ENCODE measurements at regions of chr3 and their contacts with region 1.

Region 1: GRCh38 chr3:127544192-127544802 is 46.2 kb downstream of the TPRA1 start:
- DNase-seq: peak; percentile 55
- ATAC-seq: peak; percentile 84
- H3K4me3 ChIP-seq: no peak overlapping the region
- H3K27ac ChIP-seq: no peak overlapping the region
- H3K4me1 ChIP-seq: peaks cover 9 to 20% of the 10 kb centered on the region in 2 experiments; a peak in 3 of 4 replicates
- H3K27me3 ChIP-seq: no peaks in the 10 kb centered on the region
- CTCF ChIP-seq: peak; percentile 68 to 89 (median 81)
- POLR2A ChIP-seq: no peak
- RAD21 ChIP-seq: peak; percentile 80

Region 2: DNA sequence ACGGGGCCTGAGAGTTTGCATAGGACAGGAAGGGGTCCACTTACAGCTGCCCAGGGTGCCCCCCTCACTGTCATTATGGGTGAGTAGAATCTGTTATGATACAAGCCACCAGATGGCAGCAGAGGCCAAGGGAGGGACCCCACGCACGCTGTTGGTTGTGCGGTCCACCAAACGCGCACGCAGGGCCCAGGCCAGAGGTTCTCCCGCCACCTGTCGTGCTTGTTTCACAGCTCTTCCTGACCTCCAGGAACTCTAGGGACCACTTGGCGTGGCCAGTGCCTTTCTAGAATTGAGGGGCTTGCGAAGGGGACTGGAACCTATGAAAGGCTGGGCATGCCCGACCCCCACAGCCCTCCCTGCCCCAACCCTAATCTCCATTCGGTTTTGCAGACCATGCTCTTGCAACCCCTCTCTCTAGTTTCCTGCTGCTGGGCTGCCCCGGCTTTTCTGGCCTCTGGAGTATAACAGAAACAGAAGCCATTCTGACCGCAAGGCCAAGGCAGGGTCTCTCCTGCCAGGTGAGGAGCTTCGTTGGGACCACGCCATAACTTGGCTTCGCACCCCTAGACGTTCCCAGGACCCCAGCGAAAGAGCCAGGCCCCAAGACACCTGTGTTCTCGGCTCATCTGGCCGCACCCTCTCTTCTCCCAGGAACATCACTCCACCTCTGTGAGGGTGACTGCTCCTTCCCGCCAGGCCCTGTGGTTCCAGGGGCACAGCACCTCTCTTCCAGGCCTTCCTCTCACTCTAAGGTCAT is 1409.9 kb before region 1 on chr3:
- CTCF ChIA-PET with region 1: no interaction called
- POLR2A ChIA-PET with region 1: no interaction called
- RAD21 ChIA-PET with region 1: no interaction called
- intact Hi-C with region 1: loop called (anchors 10 kb)
- DNase-seq: peak; percentile 39
- ATAC-seq: peak; percentile 95
- H3K4me3 ChIP-seq: no peak overlapping the region
- H3K27ac ChIP-seq: no peak overlapping the region
- H3K4me1 ChIP-seq: peaks cover 0 to under 1% of the 10 kb centered on the region in 2 experiments; a peak in 1 of 4 replicates
- H3K27me3 ChIP-seq: peaks cover 9% of the 10 kb centered on the region; the same call in 1 of the 2 replicates
- CTCF ChIP-seq: peak; percentile 68 to 92 (median 79)
- POLR2A ChIP-seq: no peak
- RAD21 ChIP-seq: peak; percentile 96

Region 3: GRCh38 chr3:126522363-126522788 is 1021.9 kb before region 1 on chr3:
- CTCF ChIA-PET with region 1: interaction called, 4 read pairs
- POLR2A ChIA-PET with region 1: no interaction called
- RAD21 ChIA-PET with region 1: no interaction called
- intact Hi-C with region 1: loop called (anchors 2 kb)
- DNase-seq: peak; percentile 28
- ATAC-seq: peak; percentile 66
- H3K4me3 ChIP-seq: no peak overlapping the region
- H3K27ac ChIP-seq: no peak overlapping the region
- H3K4me1 ChIP-seq: peaks cover 4 to 13% of the 10 kb centered on the region in 2 experiments; a peak in 2 of 4 replicates
- H3K27me3 ChIP-seq: no peaks in the 10 kb centered on the region
- CTCF ChIP-seq: peak; percentile 72 to 91 (median 84)
- POLR2A ChIP-seq: no peak
- RAD21 ChIP-seq: peak; percentile 81

Region 4: DNA sequence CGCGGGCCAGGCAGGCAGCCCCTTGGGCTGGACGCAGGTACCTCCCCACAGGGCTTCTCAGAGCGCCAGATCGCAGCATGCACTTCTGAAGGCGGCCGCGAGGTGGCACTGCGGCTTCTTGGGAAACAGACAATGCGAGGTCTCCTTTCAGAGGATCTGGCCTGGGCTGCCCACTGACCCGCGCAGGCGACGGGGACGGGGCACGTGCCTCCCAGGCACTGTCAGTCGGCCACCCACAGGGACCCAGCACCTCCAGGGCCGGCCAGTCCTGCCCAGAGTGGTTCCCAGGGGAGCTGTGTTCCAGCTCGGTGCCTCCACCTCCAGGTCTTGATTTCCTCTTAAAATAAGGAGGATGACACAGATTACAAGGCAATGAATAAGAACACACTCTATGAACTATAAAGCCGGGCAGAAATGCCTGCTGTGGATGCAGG is 865.0 kb before region 1 on chr3:
- CTCF ChIA-PET with region 1: no interaction called
- POLR2A ChIA-PET with region 1: no interaction called
- RAD21 ChIA-PET with region 1: interaction called in 1 of 2 experiments, 4 read pairs
- intact Hi-C with region 1: loop called (anchors 1 kb)
- DNase-seq: peak; percentile 68
- ATAC-seq: peak; percentile 99
- H3K4me3 ChIP-seq: no peak overlapping the region
- H3K27ac ChIP-seq: no peak overlapping the region
- H3K4me1 ChIP-seq: peaks cover 0 to 8% of the 10 kb centered on the region in 2 experiments; a peak in 1 of 4 replicates
- H3K27me3 ChIP-seq: no peaks in the 10 kb centered on the region
- CTCF ChIP-seq: peak; percentile 90 to 91 (median 90)
- POLR2A ChIP-seq: no peak
- RAD21 ChIP-seq: peak; percentile 93

Region 5: DNA sequence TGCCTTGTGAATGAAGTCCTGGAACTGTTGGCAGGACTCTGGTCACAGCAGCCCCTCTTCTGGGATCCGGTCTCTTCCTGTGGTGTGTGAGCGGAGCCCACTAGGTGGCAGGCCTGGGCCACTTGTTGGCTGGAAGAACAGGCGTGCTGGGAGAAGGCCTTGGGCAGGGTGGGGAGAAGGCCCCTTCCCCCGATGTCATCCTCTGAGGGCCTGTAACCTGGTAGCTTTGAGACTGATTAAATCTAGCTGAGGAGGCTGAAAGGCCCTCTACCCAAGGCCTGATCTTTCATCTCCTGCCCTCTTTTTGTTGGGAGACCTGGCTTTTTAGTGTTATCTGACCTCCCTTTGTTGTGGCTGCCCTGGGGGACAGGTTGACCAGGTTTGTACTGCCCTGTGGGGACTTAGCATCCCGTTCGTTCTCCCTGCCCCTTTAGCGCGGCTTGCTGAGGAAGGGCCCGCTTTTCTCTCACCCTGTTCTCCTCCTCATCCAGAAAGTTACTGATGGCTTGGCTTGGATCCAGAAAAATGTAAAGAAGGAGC is 791.9 kb before region 1 on chr3:
- CTCF ChIA-PET with region 1: no interaction called
- POLR2A ChIA-PET with region 1: no interaction called
- RAD21 ChIA-PET with region 1: no interaction called
- intact Hi-C with region 1: loop called (anchors 2 kb)
- DNase-seq: peak; percentile 38
- ATAC-seq: peak; percentile 99
- H3K4me3 ChIP-seq: no peak overlapping the region
- H3K27ac ChIP-seq: no peak overlapping the region
- H3K4me1 ChIP-seq: no peaks in the 10 kb centered on the region
- H3K27me3 ChIP-seq: no peaks in the 10 kb centered on the region
- CTCF ChIP-seq: peak; percentile 87 to 96 (median 91)
- POLR2A ChIP-seq: no peak
- RAD21 ChIP-seq: peak; percentile 96

Region 6: GRCh38 chr3:127374086-127375010 is 169.9 kb before region 1 on chr3:
- CTCF ChIA-PET with region 1: interaction called, 4 read pairs
- POLR2A ChIA-PET with region 1: no interaction called
- RAD21 ChIA-PET with region 1: no interaction called
- intact Hi-C with region 1: loop called (anchors 10 kb)
- DNase-seq: peak; percentile 8
- ATAC-seq: peak; percentile 90
- H3K4me3 ChIP-seq: no peak overlapping the region
- H3K27ac ChIP-seq: no peak overlapping the region
- H3K4me1 ChIP-seq: no peaks in the 10 kb centered on the region
- H3K27me3 ChIP-seq: peaks cover 5% of the 10 kb centered on the region; the same call in 1 of the 2 replicates
- CTCF ChIP-seq: peak; percentile 66 to 83 (median 72)
- POLR2A ChIP-seq: no peak
- RAD21 ChIP-seq: peak; percentile 64

Region 7: DNA sequence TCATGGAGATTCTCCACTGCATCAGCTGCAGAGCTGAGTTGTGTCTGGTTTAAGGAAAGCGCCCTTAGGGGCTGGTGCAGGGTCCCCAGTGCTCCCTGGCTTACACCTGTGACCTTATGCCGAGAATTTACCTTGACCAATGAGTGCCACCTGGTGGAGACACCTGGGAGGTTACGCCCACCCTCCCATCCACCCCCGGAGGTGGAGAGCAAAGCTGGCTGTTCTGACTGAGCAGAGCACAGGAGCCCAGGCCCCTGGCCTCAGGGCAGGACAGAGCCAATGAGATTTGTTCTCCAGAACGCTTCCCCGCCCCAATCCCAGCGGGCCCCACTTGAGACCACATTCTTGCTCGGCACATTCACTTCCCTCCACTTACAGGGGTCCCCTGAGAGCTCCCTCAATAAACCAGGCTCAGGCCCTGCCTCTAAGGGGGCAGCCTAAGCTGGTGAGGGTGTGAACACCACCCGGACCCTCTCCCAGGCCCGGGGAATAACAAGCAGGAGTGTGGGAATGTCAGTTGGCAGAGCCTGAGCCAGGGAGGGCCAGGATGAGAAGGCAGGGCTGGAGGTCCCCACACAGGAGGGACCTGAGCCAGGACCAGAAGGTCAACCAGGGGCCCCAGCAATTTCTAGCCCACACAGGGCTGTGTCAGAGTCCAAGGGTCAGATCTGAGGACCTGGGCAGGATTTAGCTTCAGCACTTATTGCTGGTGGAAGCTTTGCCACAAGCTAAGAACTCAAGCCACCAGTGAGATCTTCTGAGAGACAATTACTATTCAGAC is 70.9 kb before region 1 on chr3:
- CTCF ChIA-PET with region 1: interaction called, 14 read pairs
- POLR2A ChIA-PET with region 1: no interaction called
- RAD21 ChIA-PET with region 1: interaction called in 1 of 2 experiments, 3 read pairs
- intact Hi-C with region 1: no loop called
- DNase-seq: peak; percentile 27
- ATAC-seq: peak; percentile 94
- H3K4me3 ChIP-seq: no peak overlapping the region
- H3K27ac ChIP-seq: no peak overlapping the region
- H3K4me1 ChIP-seq: peaks cover 0 to 4% of the 10 kb centered on the region in 2 experiments; a peak in 1 of 4 replicates
- H3K27me3 ChIP-seq: peaks cover 3% of the 10 kb centered on the region; the same call in 1 of the 2 replicates
- CTCF ChIP-seq: peak; percentile 60 to 78 (median 64); a peak in 5 of 6 replicates
- POLR2A ChIP-seq: no peak
- RAD21 ChIP-seq: peak; percentile 80

Measured in HCT116 (cell line).